Naive thymus-derived CD4-positive, alpha-beta T cell (primary cell): ENCODE measurements at regions of chr11 and their contacts with region 1.

Region 1: DNA sequence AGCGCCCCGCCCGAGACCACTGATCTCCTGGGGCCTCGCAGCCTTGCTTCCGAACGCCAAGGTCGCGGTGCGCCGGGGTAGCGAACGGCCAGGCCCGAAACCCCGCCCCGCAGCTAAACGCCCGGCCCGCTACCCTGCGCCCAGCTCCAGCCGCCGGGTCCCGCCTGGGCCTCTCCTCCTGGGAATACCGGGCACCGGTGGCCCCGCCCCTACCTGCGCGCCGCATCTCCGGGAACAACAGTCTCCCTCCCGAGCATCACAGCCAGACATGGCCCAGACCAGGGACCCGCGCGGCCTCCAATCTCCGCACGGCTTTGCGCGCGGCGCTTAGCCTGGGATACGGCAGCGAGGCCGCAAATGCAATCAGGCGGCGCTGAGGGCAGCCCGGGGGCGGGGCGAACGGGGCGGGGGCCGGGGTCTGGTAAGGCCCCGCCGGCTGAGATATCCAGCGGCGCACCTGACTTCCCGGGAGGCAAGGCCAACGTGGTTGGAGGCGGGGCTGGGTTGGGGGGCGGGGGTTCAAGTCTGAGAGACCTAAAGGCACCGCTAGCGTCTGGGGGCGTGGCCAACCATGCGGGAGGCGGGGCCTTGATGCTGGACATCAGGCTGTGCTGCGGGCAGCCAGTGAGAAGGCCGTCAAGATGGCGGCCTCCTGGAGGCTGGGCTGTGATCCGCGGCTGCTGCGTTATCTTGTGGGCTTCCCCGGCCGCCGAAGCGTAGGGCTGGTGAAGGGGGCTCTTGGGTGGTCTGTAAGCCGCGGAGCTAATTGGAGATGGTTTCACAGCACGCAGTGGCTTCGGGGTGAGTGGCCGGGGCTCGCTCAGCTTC is at the starts of genes APIP and PDHX:
- DNase-seq: peak; percentile 77 to 97 (median 83)
- ATAC-seq: peak; percentile 94
- H3K4me3 ChIP-seq: peak within 1 kb of the TSS; percentile 87
- H3K4me3 Mint-ChIP-seq: peak within 1 kb of the TSS; percentile 90 to 99 (median 96)
- H3K27ac ChIP-seq: peak within 1 kb of the TSS; percentile 92
- H3K27ac Mint-ChIP-seq: peak within 1 kb of the TSS; percentile 86 to 98 (median 95)
- H3K4me1 ChIP-seq: peaks cover 9 to 18% of the 10 kb centered on the region in 2 donors
- H3K4me1 Mint-ChIP-seq: peaks cover 36 to 71% (median 57%) of the 10 kb centered on the region in 7 donors
- H3K27me3 ChIP-seq: no peaks in the 10 kb centered on the region
- H3K27me3 Mint-ChIP-seq: no peaks in the 10 kb centered on the region
- total RNA-seq, gene APIP: 8.2 to 23.6 (median 17.7) TPM
- total RNA-seq, gene PDHX: 20.0 to 54.1 (median 28.8) TPM

Region 2: GRCh38 chr11:33257897-33258630 is 1658.2 kb before region 1 on chr11:
- CTCF ChIA-PET with region 1: no interaction called
- POLR2A ChIA-PET with region 1: no interaction called
- intact Hi-C with region 1: loop called in 1 of 2 experiments (anchors 5 kb)
- DNase-seq: peak; percentile 67 to 83 (median 76)
- ATAC-seq: peak; percentile 71
- H3K4me3 ChIP-seq: peak overlapping the region; percentile 63
- H3K4me3 Mint-ChIP-seq: peak overlapping the region; percentile 89 to 99 (median 96)
- H3K27ac ChIP-seq: peak overlapping the region; percentile 97
- H3K27ac Mint-ChIP-seq: peak overlapping the region; percentile 93 to 99 (median 98)
- H3K4me1 ChIP-seq: peaks cover 27 to 28% of the 10 kb centered on the region in 2 donors
- H3K4me1 Mint-ChIP-seq: peaks cover 25 to 55% (median 44%) of the 10 kb centered on the region in 7 donors
- H3K27me3 ChIP-seq: no peaks in the 10 kb centered on the region
- H3K27me3 Mint-ChIP-seq: peaks cover 0 to 2% (median 0%) of the 10 kb centered on the region in 5 donors

Region 3: DNA sequence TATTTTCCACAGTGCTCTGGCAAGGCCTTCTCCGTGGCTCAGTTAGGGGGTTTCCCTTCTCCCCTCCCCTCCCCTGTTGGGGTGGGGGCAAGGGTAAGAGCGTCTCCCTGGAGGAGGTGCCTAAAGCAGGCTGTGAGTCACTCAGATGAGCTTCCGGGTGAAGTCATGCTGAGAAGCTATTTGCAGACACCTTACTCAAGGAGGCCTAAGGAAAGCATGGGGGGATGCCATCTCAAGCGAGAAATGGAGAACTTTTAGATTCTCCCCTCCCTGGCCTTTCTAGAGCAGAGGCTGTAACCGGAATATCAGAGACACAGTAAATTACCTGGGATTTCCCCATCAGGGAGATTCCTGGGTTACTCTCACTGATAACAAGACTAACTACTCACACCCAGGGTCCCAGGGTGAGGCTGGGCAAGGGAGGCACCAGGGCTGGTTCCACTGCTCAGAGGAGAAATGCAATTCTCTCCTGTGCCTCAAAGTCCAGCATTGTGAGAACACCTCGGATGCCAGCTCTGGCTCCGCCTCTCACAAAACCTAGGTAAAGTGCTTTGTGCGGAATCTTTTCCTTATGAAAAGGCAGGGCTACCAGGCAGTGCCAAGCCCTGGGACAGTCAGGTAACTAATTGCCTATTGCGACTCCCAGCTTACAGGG is 682.0 kb before region 1 on chr11:
- CTCF ChIA-PET with region 1: no interaction called
- POLR2A ChIA-PET with region 1: no interaction called
- intact Hi-C with region 1: loop called in 1 of 2 experiments (anchors 2 kb)
- DNase-seq: peak in 8 of 9 donors; percentile 50 to 89 (median 62)
- ATAC-seq: no peak
- H3K4me3 ChIP-seq: peak overlapping the region; percentile 16
- H3K4me3 Mint-ChIP-seq: peak overlapping the region in 5 of 10 donors; percentile 35 to 69 (median 47)
- H3K27ac ChIP-seq: peak overlapping the region; percentile 39
- H3K27ac Mint-ChIP-seq: peak overlapping the region in 7 of 9 donors; percentile 12 to 74 (median 65)
- H3K4me1 ChIP-seq: peaks cover 8 to 18% of the 10 kb centered on the region in 2 donors
- H3K4me1 Mint-ChIP-seq: peaks cover 0 to 34% (median 13%) of the 10 kb centered on the region in 7 donors
- H3K27me3 ChIP-seq: no peaks in the 10 kb centered on the region
- H3K27me3 Mint-ChIP-seq: peaks cover 0 to 7% (median 0%) of the 10 kb centered on the region in 5 donors

Region 4: GRCh38 chr11:34825670-34826383 is 90.4 kb before region 1 on chr11:
- CTCF ChIA-PET with region 1: no interaction called
- POLR2A ChIA-PET with region 1: no interaction called
- intact Hi-C with region 1: no loop called
- DNase-seq: no peak
- ATAC-seq: no peak
- H3K4me3 ChIP-seq: no peak overlapping the region
- H3K4me3 Mint-ChIP-seq: no peak overlapping the region
- H3K27ac ChIP-seq: no peak overlapping the region
- H3K27ac Mint-ChIP-seq: no peak overlapping the region
- H3K4me1 ChIP-seq: no peaks in the 10 kb centered on the region
- H3K4me1 Mint-ChIP-seq: peaks cover 0 to 3% (median 0%) of the 10 kb centered on the region in 7 donors
- H3K27me3 ChIP-seq: no peaks in the 10 kb centered on the region
- H3K27me3 Mint-ChIP-seq: peaks cover 0 to 8% (median 0%) of the 10 kb centered on the region in 5 donors

Region 5: DNA sequence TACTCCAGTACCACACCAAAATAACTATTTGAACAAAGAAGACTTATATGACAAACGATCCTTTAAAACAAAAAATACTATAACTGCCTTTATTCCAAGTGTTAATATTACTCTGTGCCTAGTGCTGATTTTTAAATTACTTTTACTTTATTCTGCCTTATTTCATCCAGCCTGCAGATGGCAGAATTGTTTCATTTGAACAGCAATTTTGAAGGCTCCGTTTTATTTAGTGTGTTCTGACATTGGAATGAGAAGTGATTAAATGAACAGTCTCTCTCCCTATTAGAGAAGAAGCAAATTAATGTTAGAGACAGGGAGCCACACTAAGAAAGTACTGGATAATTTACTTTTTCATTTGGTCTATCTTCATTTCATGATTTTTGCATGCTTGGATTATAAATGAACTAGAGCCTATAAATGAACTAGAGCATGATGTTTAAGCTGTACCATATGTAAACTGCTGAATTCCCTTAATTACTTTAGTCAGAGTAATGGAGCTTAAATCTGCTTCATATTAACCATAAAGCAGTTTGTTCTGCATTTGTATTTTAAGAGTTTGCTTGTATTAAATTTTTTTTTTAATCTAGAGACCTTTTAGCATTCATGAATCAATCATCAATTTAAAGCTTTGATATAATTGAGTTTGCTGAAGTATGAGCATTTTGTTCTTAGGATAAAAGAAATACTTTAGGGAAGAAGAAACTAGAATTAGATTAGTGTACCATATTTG is 10.0 kb after region 1 on chr11:
- CTCF ChIA-PET with region 1: interaction called, 3 read pairs
- POLR2A ChIA-PET with region 1: interaction called, 10 read pairs
- intact Hi-C with region 1: no loop called
- DNase-seq: peak in 7 of 9 donors; percentile 18 to 61 (median 58)
- ATAC-seq: peak; percentile 80
- H3K4me3 ChIP-seq: no peak overlapping the region
- H3K4me3 Mint-ChIP-seq: no peak overlapping the region
- H3K27ac ChIP-seq: no peak overlapping the region
- H3K27ac Mint-ChIP-seq: peak overlapping the region in 1 of 9 donors; percentile 49
- H3K4me1 ChIP-seq: peaks cover 0 to 10% of the 10 kb centered on the region in 2 donors
- H3K4me1 Mint-ChIP-seq: peaks cover 10 to 54% (median 29%) of the 10 kb centered on the region in 7 donors
- H3K27me3 ChIP-seq: no peaks in the 10 kb centered on the region
- H3K27me3 Mint-ChIP-seq: no peaks in the 10 kb centered on the region

Region 6: GRCh38 chr11:35144136-35144741 is 228.0 kb after region 1 on chr11:
- CTCF ChIA-PET with region 1: no interaction called
- POLR2A ChIA-PET with region 1: no interaction called
- intact Hi-C with region 1: loop called (anchors 2 kb)
- DNase-seq: peak in 8 of 9 donors; percentile 59 to 85 (median 74)
- ATAC-seq: peak; percentile 59
- H3K4me3 ChIP-seq: peak overlapping the region; percentile 97
- H3K4me3 Mint-ChIP-seq: peak overlapping the region; percentile 83 to 99 (median 94)
- H3K27ac ChIP-seq: peak overlapping the region; percentile 88
- H3K27ac Mint-ChIP-seq: peak overlapping the region; percentile 79 to 100 (median 92)
- H3K4me1 ChIP-seq: peaks cover 68 to 74% of the 10 kb centered on the region in 2 donors
- H3K4me1 Mint-ChIP-seq: peaks cover 62 to 83% (median 77%) of the 10 kb centered on the region in 7 donors
- H3K27me3 ChIP-seq: no peaks in the 10 kb centered on the region
- H3K27me3 Mint-ChIP-seq: no peaks in the 10 kb centered on the region

Region 7: DNA sequence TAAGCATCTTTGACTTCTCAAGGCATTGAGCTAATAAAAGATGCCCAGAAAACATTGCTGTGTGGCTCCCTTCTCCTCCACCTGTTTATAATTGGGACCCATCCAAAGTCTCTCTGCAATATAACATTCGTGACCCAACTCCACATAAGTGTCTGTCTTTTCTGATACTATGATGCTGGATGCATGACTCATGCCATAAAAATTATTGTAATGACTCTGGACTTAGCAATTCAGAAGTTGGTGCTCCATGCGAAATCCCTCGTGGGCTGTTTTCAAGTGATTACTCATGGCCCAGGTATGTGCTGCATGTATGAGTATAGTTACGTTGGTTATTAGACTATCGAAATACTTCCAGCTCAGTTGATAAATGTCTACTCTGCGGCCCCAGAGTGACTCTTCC is 713.7 kb after region 1 on chr11:
- CTCF ChIA-PET with region 1: no interaction called
- POLR2A ChIA-PET with region 1: no interaction called
- intact Hi-C with region 1: no loop called
- DNase-seq: no peak
- ATAC-seq: no peak
- H3K4me3 ChIP-seq: no peak overlapping the region
- H3K4me3 Mint-ChIP-seq: no peak overlapping the region
- H3K27ac ChIP-seq: no peak overlapping the region
- H3K27ac Mint-ChIP-seq: no peak overlapping the region
- H3K4me1 ChIP-seq: no peaks in the 10 kb centered on the region
- H3K4me1 Mint-ChIP-seq: peaks cover 0 to 1% (median 0%) of the 10 kb centered on the region in 7 donors
- H3K27me3 ChIP-seq: peaks cover 0 to 4% of the 10 kb centered on the region in 2 donors
- H3K27me3 Mint-ChIP-seq: peaks cover 43 to 73% (median 66%) of the 10 kb centered on the region in 5 donors

Region 8: GRCh38 chr11:36289226-36289852 is 1373.1 kb after region 1 on chr11 and contains the start of gene COMMD9:
- CTCF ChIA-PET with region 1: no interaction called
- POLR2A ChIA-PET with region 1: no interaction called
- intact Hi-C with region 1: loop called in 1 of 2 experiments (anchors 1 kb)
- DNase-seq: peak; percentile 78 to 93 (median 91)
- ATAC-seq: peak; percentile 98
- H3K4me3 ChIP-seq: peak within 1 kb of the TSS; percentile 98
- H3K4me3 Mint-ChIP-seq: peak within 1 kb of the TSS; percentile 87 to 99 (median 94)
- H3K27ac ChIP-seq: peak within 1 kb of the TSS; percentile 58
- H3K27ac Mint-ChIP-seq: peak within 1 kb of the TSS; percentile 85 to 98 (median 90)
- H3K4me1 ChIP-seq: peaks cover 6 to 14% of the 10 kb centered on the region in 2 donors
- H3K4me1 Mint-ChIP-seq: peaks cover 24 to 55% (median 42%) of the 10 kb centered on the region in 7 donors
- H3K27me3 ChIP-seq: no peaks in the 10 kb centered on the region
- H3K27me3 Mint-ChIP-seq: no peaks in the 10 kb centered on the region
- total RNA-seq, gene COMMD9: 42.6 to 62.2 (median 45.9) TPM